MCF 10A (cell line): ENCODE measurements at regions of chr21 and their contacts with region 1.

Region 1: GRCh38 chr21:32257962-32258785 is 20.7 kb downstream of the MIS18A start:
- DNase-seq: peak; percentile 87
- H3K4me3 Mint-ChIP-seq: peak overlapping the region; percentile 19
- H3K27ac Mint-ChIP-seq: no peak overlapping the region
- H3K4me1 Mint-ChIP-seq: peaks cover 23% of the 10 kb centered on the region
- H3K27me3 Mint-ChIP-seq: peaks cover 11% of the 10 kb centered on the region
- CTCF ChIP-seq: peak; percentile 76

Region 2: GRCh38 chr21:31781737-31782136 is 476.4 kb before region 1 on chr21:
- CTCF ChIA-PET with region 1: interaction called, 59 read pairs
- POLR2A ChIA-PET with region 1: interaction called, 7 read pairs
- intact Hi-C with region 1: loop called (anchors 1 kb)
- DNase-seq: peak; percentile 74
- H3K4me3 Mint-ChIP-seq: no peak overlapping the region
- H3K27ac Mint-ChIP-seq: no peak overlapping the region
- H3K4me1 Mint-ChIP-seq: peaks cover 16% of the 10 kb centered on the region
- H3K27me3 Mint-ChIP-seq: no peaks in the 10 kb centered on the region
- CTCF ChIP-seq: no peak

Region 3: GRCh38 chr21:31798842-31799704 is 459.1 kb before region 1 on chr21:
- CTCF ChIA-PET with region 1: interaction called, 12 read pairs
- POLR2A ChIA-PET with region 1: no interaction called
- intact Hi-C with region 1: no loop called
- DNase-seq: no peak
- H3K4me3 Mint-ChIP-seq: no peak overlapping the region
- H3K27ac Mint-ChIP-seq: no peak overlapping the region
- H3K4me1 Mint-ChIP-seq: peaks cover 19% of the 10 kb centered on the region
- H3K27me3 Mint-ChIP-seq: no peaks in the 10 kb centered on the region
- CTCF ChIP-seq: no peak

Region 4: DNA sequence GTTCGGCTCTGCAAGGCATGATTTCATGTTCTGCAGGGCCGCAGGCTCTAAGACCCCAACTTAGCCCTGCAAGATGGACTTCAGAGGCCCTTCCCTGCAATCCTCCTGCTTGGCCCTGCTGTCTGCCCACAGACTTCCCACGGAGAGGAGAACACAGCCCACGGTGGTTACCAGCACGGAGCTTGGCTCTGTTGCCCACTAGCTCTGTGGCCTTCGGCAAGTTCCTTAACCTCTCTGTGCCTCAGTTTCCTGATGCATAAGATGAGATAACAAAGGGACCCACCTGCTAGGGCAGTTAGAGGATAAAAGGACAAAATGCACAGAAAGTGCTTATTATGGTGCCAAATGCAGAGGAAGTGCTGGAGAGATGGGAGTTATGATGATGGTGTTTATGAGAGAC is 185.0 kb before region 1 on chr21:
- CTCF ChIA-PET with region 1: no interaction called
- POLR2A ChIA-PET with region 1: no interaction called
- intact Hi-C with region 1: no loop called
- DNase-seq: no peak
- H3K4me3 Mint-ChIP-seq: no peak overlapping the region
- H3K27ac Mint-ChIP-seq: no peak overlapping the region
- H3K4me1 Mint-ChIP-seq: no peaks in the 10 kb centered on the region
- H3K27me3 Mint-ChIP-seq: peaks cover 13% of the 10 kb centered on the region
- CTCF ChIP-seq: no peak

Region 5: DNA sequence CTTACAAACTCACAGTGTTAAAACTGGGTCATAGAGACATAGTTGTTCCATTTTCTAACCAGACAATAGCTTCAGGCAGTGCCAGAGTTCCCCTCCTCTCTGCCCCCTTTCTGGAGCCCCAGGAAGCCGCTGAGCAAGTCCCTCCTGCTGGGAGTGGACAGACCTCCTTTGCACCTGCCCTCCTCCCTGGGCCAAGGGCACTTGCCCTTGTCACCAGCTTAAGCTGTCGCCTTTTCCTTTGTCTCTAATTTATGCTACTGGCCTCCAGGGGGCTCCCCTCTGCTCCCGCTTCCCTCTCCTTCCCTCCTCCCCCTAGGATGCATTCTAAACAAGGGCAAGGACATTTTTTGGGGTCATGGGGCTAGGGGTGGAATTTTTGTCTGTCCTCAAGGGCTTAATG is 161.8 kb before region 1 on chr21:
- CTCF ChIA-PET with region 1: interaction called, 4 read pairs
- POLR2A ChIA-PET with region 1: no interaction called
- intact Hi-C with region 1: loop called (anchors 1 kb)
- DNase-seq: peak; percentile 39
- H3K4me3 Mint-ChIP-seq: no peak overlapping the region
- H3K27ac Mint-ChIP-seq: no peak overlapping the region
- H3K4me1 Mint-ChIP-seq: peaks cover 5% of the 10 kb centered on the region
- H3K27me3 Mint-ChIP-seq: peaks cover 21% of the 10 kb centered on the region
- CTCF ChIP-seq: peak; percentile 36

Region 6: DNA sequence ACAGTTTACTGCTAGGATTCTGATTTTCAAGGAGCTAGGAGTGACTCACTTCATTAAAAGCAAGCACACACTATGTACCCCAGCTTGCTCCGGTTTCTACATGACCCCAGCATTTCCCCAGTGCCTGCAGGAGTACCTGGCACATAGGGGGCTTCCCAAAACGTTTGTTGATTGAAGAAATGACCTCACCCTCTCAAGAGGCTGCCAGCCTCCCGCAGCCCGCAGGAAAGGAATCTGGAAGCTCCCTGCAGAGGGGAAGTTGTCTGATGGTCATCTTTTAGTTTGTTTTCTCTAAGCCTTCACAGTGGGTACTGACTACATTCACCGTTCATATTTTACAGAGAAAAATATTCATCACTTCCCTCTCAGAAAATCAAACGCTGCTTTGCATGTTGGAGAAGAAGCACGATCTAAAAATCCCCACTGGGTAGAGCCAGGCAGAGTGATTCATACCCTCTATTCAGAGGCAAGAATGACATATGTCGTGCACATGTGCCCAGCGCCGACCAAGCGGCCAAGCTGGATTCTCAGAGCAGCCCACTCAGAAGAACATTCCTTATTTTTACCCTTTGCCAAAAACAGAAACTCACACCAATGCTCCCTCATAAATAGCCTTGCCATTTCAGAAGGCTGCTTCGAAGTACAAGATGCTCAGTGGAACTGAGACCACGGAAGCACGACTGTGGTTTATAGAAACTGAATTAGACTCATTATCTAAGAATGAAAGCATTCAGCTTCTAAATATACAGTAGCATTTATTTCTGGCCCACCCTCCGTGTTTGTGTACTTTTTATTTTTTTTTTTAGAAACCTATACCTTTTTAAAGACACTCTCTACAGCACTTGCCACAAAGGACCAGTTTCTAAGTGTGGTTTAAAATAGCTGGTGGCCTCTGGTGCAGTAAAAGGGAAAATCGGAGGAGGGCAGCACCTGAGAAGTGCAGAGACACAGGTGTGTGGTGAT is 122.5 kb before region 1 on chr21:
- CTCF ChIA-PET with region 1: no interaction called
- POLR2A ChIA-PET with region 1: interaction called, 3 read pairs
- intact Hi-C with region 1: loop called (anchors 10 kb)
- DNase-seq: peak; percentile 69
- H3K4me3 Mint-ChIP-seq: peak overlapping the region; percentile 59
- H3K27ac Mint-ChIP-seq: no peak overlapping the region
- H3K4me1 Mint-ChIP-seq: peaks cover 52% of the 10 kb centered on the region
- H3K27me3 Mint-ChIP-seq: no peaks in the 10 kb centered on the region
- CTCF ChIP-seq: no peak